ENCODE measurements at regions of chr22 and their contacts with region 1.

Region 1: GRCh38 chr22:24503137-24503842 is 8.2 kb downstream of the UPB1 start:
- DNase-seq: peak; percentile 63 to 73
- H3K4me3 ChIP-seq: no peak overlapping the region
- H3K27ac ChIP-seq: no peak overlapping the region
- H3K4me1 ChIP-seq: peaks cover 7 to 38% (median 21%) of the 10 kb centered on the region in 4 donors
- H3K27me3 ChIP-seq: no peaks in the 10 kb centered on the region
- CTCF ChIP-seq: peak in 5 of 7 experiments; percentile 34 to 59 (median 53)
- EP300 ChIP-seq: no peak
- POLR2A ChIP-seq: no peak

Region 2: GRCh38 chr22:24423519-24424000 is 79.7 kb before region 1 on chr22:
- intact Hi-C with region 1: loop called (anchors 5 kb)
- DNase-seq: peak; percentile 73 to 82
- H3K4me3 ChIP-seq: peak overlapping the region; percentile 59 to 73 (median 60)
- H3K27ac ChIP-seq: peak overlapping the region in 4 of 5 donors; percentile 32 to 77 (median 71)
- H3K4me1 ChIP-seq: peaks cover 25 to 55% (median 37%) of the 10 kb centered on the region in 4 donors
- H3K27me3 ChIP-seq: peaks cover 0 to 35% (median 12%) of the 10 kb centered on the region in 3 donors
- CTCF ChIP-seq: peak in 5 of 7 experiments; percentile 15 to 98 (median 94)
- EP300 ChIP-seq: no peak
- POLR2A ChIP-seq: no peak